B cell (primary cell): ENCODE measurements at regions of chr10 and their contacts with region 1.

Region 1: DNA sequence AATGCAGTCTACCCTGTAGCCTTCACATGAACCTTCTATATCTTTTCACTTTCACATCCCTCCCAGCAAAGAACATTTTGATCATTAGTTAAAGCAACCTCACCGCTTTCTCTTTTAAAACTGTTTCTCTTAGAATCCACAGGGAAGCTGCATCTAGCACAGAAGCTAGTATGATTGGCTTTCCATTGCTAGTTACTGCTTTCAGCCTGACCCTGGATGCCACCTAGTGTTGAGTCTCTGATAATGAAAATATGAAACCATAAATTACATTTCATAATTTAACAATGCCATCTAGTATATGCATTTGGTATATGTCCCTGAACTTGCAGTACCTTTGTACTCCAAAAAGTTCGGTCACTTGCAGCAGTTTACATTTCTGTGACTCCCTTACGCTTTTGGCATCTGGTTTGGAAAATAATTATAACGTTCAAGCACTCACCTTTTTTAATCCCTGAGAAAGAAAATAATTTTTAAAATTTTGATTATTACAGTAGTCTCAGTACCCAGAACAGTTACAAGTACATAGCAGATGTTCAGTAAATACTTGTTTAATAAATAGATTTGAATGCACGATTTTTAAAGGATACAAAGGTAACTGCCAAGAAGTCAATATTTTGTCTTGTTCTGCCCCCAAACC is 22.7 kb downstream of the CISD1 start:
- DNase-seq: peak; percentile 64
- ATAC-seq: peak; percentile 68
- H3K4me3 ChIP-seq: no peak overlapping the region
- H3K4me3 Mint-ChIP-seq: no peak overlapping the region
- H3K27ac ChIP-seq: no peak overlapping the region
- H3K27ac Mint-ChIP-seq: no peak overlapping the region
- H3K4me1 ChIP-seq: no peaks in the 10 kb centered on the region
- H3K4me1 Mint-ChIP-seq: no peaks in the 10 kb centered on the region
- H3K27me3 ChIP-seq: no peaks in the 10 kb centered on the region
- H3K27me3 Mint-ChIP-seq: no peaks in the 10 kb centered on the region
- CTCF ChIP-seq: peak; percentile 88

Region 2: DNA sequence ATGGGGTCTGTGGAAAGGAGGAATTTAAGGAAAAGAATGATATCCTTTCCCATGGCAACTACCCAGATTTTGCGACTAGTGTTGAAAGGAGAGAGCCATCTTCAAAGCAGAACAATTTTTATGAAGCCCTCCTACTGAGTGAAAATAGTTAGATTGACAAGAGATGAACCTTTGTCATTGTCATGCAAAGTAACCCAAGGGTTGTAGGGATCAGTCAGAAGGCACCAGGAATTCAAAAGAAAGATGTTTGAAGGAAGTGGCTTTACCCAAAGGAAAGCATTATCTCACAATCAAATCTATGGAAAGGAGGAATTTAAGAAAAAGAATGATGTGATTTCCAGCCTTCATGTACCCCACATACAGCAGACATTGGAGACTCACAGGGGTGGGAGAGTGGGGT is 568.4 kb before region 1 on chr10:
- CTCF ChIA-PET with region 1: no interaction called
- POLR2A ChIA-PET with region 1: no interaction called
- intact Hi-C with region 1: no loop called
- DNase-seq: no peak
- ATAC-seq: no peak
- H3K4me3 ChIP-seq: no peak overlapping the region
- H3K4me3 Mint-ChIP-seq: no peak overlapping the region
- H3K27ac ChIP-seq: no peak overlapping the region
- H3K27ac Mint-ChIP-seq: no peak overlapping the region
- H3K4me1 ChIP-seq: no peaks in the 10 kb centered on the region
- H3K4me1 Mint-ChIP-seq: no peaks in the 10 kb centered on the region
- H3K27me3 ChIP-seq: no peaks in the 10 kb centered on the region
- H3K27me3 Mint-ChIP-seq: no peaks in the 10 kb centered on the region
- CTCF ChIP-seq: no peak

Region 3: GRCh38 chr10:58177362-58177947 is 114.2 kb before region 1 on chr10:
- CTCF ChIA-PET with region 1: interaction called, 407 read pairs
- POLR2A ChIA-PET with region 1: no interaction called
- intact Hi-C with region 1: loop called (anchors 1 kb)
- DNase-seq: peak; percentile 37
- ATAC-seq: peak; percentile 31
- H3K4me3 ChIP-seq: no peak overlapping the region
- H3K4me3 Mint-ChIP-seq: no peak overlapping the region
- H3K27ac ChIP-seq: no peak overlapping the region
- H3K27ac Mint-ChIP-seq: no peak overlapping the region
- H3K4me1 ChIP-seq: no peaks in the 10 kb centered on the region
- H3K4me1 Mint-ChIP-seq: no peaks in the 10 kb centered on the region
- H3K27me3 ChIP-seq: no peaks in the 10 kb centered on the region
- H3K27me3 Mint-ChIP-seq: no peaks in the 10 kb centered on the region
- CTCF ChIP-seq: peak; percentile 82

Region 4: DNA sequence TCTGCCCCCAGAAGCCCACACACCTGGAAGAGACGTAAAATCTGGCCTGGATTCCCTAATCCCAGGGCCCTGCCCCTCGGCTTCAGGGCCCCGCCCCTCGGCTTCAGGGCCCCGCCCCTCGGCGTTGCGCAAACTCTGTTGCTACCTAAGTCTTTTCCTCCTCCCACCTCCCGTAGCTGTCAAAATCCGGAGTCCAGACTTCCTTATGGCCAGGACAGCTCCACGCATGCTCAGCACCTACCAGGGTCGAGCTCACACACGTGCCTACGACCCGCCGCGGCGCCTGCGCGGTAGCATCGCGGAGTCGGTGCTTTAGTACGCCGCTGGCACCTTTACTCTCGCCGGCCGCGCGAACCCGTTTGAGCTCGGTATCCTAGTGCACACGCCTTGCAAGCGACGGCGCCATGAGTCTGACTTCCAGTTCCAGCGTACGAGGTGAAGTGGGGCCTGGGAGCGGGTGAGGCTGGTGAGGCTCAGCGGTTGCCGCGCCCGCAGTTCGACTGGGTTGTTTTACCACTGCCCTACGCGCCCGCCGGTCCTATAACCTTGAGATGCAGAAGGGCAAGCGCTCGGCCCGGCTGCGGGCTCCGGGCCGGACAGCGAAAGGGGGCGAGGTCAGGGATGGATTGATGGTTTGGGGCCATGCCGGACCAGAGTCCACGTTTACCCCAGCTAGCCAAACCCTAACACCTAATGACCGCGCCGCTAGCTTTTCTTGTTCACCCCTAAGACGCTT is 22.6 kb before region 1 on chr10 and contains the start of gene CISD1:
- CTCF ChIA-PET with region 1: interaction called, 15 read pairs
- POLR2A ChIA-PET with region 1: no interaction called
- intact Hi-C with region 1: no loop called
- DNase-seq: peak; percentile 99
- ATAC-seq: peak; percentile 66
- H3K4me3 ChIP-seq: peak within 1 kb of the TSS; percentile 67 to 88 (median 76)
- H3K4me3 Mint-ChIP-seq: peak within 1 kb of the TSS; percentile 97
- H3K27ac ChIP-seq: peak within 1 kb of the TSS; percentile 89 to 98
- H3K27ac Mint-ChIP-seq: peak within 1 kb of the TSS; percentile 96
- H3K4me1 ChIP-seq: peaks cover 25 to 33% of the 10 kb centered on the region in 2 donors
- H3K4me1 Mint-ChIP-seq: peaks cover 36% of the 10 kb centered on the region
- H3K27me3 ChIP-seq: no peaks in the 10 kb centered on the region
- H3K27me3 Mint-ChIP-seq: no peaks in the 10 kb centered on the region
- CTCF ChIP-seq: no peak
- total RNA-seq, gene CISD1: 6.3 and 7.3 TPM in 2 replicates

Region 5: DNA sequence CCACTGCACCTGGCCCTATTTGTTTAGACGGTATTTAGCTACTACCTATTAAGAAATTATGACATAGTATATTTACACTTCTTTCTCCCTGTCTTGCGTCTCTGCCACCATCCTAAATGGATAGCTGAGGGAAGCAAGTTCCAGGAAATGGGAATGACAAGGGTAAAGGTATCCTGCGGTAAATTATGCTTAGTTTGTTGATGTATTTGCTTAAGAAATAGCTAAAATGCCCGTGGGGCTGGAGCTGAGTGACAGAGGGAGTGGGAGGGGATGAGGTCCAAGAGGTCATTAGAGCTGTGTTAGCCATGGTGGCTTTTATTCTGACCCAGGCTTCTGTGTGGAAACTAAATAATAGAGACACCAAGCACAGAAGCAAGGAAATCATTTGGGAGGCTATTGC is 14.2 kb after region 1 on chr10:
- CTCF ChIA-PET with region 1: interaction called, 26 read pairs
- POLR2A ChIA-PET with region 1: no interaction called
- intact Hi-C with region 1: no loop called
- DNase-seq: no peak
- ATAC-seq: no peak
- H3K4me3 ChIP-seq: no peak overlapping the region
- H3K4me3 Mint-ChIP-seq: no peak overlapping the region
- H3K27ac ChIP-seq: no peak overlapping the region
- H3K27ac Mint-ChIP-seq: no peak overlapping the region
- H3K4me1 ChIP-seq: no peaks in the 10 kb centered on the region
- H3K4me1 Mint-ChIP-seq: no peaks in the 10 kb centered on the region
- H3K27me3 ChIP-seq: peaks cover 0 to 14% (median 8%) of the 10 kb centered on the region in 4 experiments
- H3K27me3 Mint-ChIP-seq: peaks cover 52% of the 10 kb centered on the region
- CTCF ChIP-seq: no peak

Region 6: GRCh38 chr10:58543141-58543540 is 251.5 kb after region 1 on chr10:
- CTCF ChIA-PET with region 1: no interaction called
- POLR2A ChIA-PET with region 1: no interaction called
- intact Hi-C with region 1: no loop called
- DNase-seq: no peak
- ATAC-seq: no peak
- H3K4me3 ChIP-seq: no peak overlapping the region
- H3K4me3 Mint-ChIP-seq: no peak overlapping the region
- H3K27ac ChIP-seq: no peak overlapping the region
- H3K27ac Mint-ChIP-seq: no peak overlapping the region
- H3K4me1 ChIP-seq: no peaks in the 10 kb centered on the region
- H3K4me1 Mint-ChIP-seq: no peaks in the 10 kb centered on the region
- H3K27me3 ChIP-seq: no peaks in the 10 kb centered on the region
- H3K27me3 Mint-ChIP-seq: no peaks in the 10 kb centered on the region
- CTCF ChIP-seq: no peak

Region 7: DNA sequence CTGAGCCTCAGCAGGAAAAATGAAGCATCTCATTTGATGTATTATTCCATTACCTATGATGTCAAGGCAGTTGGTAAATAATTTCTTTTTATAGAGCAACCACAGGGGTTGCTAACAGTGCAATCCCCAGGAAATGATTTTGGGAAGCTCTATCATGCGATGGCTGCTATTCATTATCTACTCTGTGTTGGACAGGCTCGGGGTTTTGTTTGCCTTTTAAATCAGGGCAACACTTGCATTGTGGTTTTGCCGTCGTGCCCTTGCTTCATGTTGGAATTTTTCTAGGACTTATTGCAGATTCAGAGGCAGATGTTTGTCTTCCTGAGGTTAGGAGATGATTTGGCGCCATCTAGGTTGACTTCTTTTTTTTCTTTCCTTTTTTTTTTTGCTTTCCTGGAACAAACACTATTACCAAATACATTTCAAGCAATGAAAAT is 349.5 kb after region 1 on chr10:
- CTCF ChIA-PET with region 1: no interaction called
- POLR2A ChIA-PET with region 1: no interaction called
- intact Hi-C with region 1: no loop called
- DNase-seq: no peak
- ATAC-seq: no peak
- H3K4me3 ChIP-seq: no peak overlapping the region
- H3K4me3 Mint-ChIP-seq: no peak overlapping the region
- H3K27ac ChIP-seq: no peak overlapping the region
- H3K27ac Mint-ChIP-seq: no peak overlapping the region
- H3K4me1 ChIP-seq: no peaks in the 10 kb centered on the region
- H3K4me1 Mint-ChIP-seq: no peaks in the 10 kb centered on the region
- H3K27me3 ChIP-seq: no peaks in the 10 kb centered on the region
- H3K27me3 Mint-ChIP-seq: no peaks in the 10 kb centered on the region
- CTCF ChIP-seq: no peak